ENCODE measurements at regions of chr5 and their contacts with region 1.

Region 1: DNA sequence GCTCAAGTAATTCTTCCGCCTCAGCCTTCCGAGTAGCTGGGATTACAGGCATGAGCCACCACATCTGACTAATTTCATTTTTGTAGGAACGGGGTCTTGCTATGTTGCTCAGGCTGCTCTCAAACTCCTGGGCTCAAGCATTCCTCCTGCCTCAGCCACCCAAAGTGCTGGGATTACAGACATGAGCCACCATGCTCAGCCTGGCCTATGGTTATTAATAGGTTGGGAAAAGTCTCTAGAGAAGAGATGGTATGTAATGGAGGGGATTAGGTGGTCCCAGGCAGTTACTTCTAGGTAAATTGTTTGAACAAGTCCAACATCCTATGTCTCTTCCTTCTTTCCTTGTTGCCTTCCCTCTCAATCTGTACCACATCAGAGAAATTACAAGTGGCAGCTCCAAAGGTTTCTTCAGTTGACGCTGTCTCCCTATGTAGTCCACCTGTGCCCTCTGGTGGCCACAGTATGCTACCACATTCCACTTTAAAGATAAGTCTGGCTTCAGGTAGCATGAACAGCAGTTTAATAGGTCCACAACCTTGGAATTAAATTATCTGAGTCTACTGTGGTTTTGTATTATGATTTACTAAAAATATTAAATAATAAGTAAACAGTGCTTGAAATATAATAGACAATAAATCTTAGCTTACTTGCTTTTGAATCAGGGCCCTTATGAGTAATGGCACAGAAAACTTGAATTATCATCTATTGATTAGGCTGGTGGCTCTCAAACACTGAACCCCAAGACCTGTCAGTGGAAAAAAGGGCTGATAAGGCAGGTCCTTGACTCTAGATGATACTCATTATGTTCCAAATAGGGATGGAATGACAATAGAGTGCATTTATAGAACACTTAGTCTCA is 9.7 kb downstream of the TIGD6 start:
- DNase-seq: peak; percentile 86
- H3K4me3 ChIP-seq: no peak overlapping the region
- H3K27ac ChIP-seq: no peak overlapping the region
- H3K4me1 ChIP-seq: no peaks in the 10 kb centered on the region
- H3K27me3 ChIP-seq: no peaks in the 10 kb centered on the region
- CTCF ChIP-seq: peak; percentile 87

Region 2: DNA sequence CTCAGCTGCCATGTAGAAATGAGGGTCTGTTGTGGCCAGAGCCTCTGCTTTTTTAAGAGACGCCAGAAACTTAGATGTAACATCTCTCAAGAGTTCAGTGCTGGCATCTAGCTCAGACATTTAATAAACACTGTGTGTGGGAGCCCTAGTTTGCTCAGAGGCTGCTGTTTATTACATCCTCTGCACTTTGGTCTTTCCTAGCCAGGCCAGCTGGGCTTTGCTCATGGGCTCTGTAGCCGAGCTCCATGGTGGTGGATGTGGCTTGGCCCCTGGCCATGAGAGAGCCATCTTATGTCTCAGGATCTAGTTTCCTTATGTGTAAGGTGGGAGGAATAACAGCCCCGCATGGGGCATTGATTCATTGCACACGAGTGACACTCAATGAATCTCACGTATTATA is 379.4 kb before region 1 on chr5:
- intact Hi-C with region 1: no loop called
- DNase-seq: peak; percentile 84
- H3K4me3 ChIP-seq: no peak overlapping the region
- H3K27ac ChIP-seq: peak overlapping the region; percentile 76
- H3K4me1 ChIP-seq: peaks cover 9% of the 10 kb centered on the region
- H3K27me3 ChIP-seq: no peaks in the 10 kb centered on the region
- CTCF ChIP-seq: no peak

Region 3: DNA sequence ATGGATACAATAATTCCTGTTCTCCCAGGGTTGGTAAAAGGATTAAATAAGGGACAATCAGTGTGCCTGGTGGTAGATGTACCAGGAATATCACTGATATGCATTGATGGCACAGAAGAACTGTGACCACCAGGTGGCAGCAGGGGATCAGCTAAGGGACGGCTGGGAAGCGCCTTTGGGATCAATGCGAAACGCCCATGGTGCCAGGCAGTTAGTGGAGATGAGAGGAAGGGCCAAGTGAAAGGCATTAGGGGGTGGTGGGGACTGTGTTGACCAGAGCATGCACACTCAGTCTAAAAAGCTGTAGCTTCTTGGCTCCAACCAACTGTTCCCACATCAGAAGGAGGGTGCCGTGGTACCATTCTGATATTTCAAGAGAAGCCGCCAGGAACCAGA is 353.9 kb before region 1 on chr5:
- intact Hi-C with region 1: loop called (anchors 5 kb)
- DNase-seq: peak; percentile 90
- H3K4me3 ChIP-seq: no peak overlapping the region
- H3K27ac ChIP-seq: no peak overlapping the region
- H3K4me1 ChIP-seq: peaks cover 6% of the 10 kb centered on the region
- H3K27me3 ChIP-seq: no peaks in the 10 kb centered on the region
- CTCF ChIP-seq: peak; percentile 83

Region 4: DNA sequence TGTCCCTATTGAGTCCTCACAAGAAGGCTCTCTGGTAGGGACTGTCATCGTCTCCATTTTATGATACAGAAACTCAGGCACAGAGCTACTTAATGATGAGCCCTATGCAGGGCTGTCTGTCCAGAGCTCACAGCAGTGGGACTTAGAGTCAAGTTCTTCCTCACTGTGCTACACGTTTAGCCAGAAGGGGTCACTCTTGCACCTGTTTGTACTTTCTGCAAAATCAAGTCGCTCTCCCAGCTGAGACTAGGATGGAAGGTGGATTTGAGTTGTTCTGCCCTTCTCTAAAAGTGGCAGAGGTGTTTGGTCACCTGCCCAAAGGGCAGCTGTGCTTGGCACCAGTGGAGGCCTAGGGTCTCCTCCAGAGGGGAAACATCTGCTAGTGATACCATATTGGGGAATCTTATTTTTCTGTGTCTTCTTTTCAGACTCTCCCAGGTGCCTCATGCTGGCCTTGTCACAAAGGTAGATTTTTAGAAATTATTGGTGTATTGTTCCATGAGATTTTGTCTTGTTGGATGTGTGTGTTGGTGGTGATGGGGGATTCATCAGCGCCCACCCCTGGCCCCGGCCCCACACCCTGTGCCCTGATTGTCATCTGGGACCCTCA is 156.4 kb before region 1 on chr5:
- intact Hi-C with region 1: loop called (anchors 5 kb)
- DNase-seq: peak; percentile 77
- H3K4me3 ChIP-seq: no peak overlapping the region
- H3K27ac ChIP-seq: no peak overlapping the region
- H3K4me1 ChIP-seq: no peaks in the 10 kb centered on the region
- H3K27me3 ChIP-seq: no peaks in the 10 kb centered on the region
- CTCF ChIP-seq: peak; percentile 44

Region 5: DNA sequence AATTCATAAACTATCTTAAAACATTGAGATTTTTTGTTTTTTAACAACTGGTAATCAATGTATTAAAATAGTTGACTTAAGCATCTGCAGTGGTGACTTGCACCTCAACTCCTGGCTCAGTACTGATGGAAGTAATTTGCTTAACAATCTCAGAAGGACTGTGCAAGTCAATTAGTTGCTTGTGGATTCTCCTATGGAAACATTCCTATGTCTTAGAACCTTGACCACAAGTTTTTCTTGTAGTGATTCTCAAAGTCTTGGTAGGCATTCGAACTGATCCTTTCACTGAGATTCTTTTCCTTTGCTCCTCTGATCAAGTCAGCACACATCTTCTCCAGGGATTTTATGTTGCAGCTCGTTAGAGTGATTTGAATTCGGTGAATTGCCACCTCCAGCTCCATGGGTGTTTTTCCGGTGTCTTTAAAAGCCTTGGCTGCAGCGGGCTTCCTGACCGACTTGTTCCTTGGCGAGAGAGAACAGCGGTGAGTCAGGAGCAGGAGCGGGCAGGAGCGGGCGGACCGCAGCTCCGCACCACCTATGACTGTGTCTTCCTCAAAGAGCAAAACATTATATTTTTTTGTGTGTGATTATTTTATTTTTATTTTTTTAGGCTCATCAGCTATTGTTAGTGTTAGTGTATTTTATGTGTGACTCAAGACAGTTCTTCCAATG is 30.9 kb after region 1 on chr5:
- intact Hi-C with region 1: no loop called
- DNase-seq: no peak
- H3K4me3 ChIP-seq: no peak overlapping the region
- H3K27ac ChIP-seq: no peak overlapping the region
- H3K4me1 ChIP-seq: no peaks in the 10 kb centered on the region
- H3K27me3 ChIP-seq: no peaks in the 10 kb centered on the region
- CTCF ChIP-seq: no peak

Measured in colonic mucosa (tissue), 4 donors.